ENCODE measurements at regions of chr11 and their contacts with region 1.

Region 1: DNA sequence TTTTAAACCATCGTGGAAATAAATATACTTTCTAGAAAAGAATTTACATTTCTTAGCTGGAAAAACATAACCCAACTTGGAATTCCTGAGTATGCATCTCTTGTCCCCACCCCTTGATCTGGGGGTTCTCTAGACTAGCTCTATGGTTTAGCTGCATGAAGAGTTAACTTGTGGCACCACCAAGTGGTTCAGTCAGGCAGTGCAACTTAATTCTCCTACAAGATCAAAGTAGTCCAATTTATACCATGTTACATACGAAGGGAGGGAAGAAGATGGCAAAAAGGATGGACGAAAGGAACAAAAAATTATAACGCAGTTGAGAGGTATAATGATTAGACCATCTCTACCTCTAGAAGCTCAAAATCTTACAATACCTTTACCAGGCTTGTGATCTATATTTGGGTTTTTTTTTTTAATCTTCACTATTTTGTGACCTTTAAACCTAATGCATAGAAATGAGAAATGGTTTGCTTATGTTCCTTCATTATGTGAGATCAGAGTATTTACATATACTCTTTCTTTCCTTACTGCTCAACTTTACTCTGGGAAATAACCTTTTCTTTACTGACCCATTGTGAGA is 28.5 kb upstream of the ALKBH3 start:
- DNase-seq: peak; percentile 68 to 70
- H3K4me3 ChIP-seq: no peak overlapping the region
- H3K4me3 Mint-ChIP-seq: no peak overlapping the region
- H3K27ac Mint-ChIP-seq: no peak overlapping the region
- H3K4me1 ChIP-seq: no peaks in the 10 kb centered on the region
- H3K4me1 Mint-ChIP-seq: no peaks in the 10 kb centered on the region
- H3K27me3 ChIP-seq: no peaks in the 10 kb centered on the region
- H3K27me3 Mint-ChIP-seq: no peaks in the 10 kb centered on the region
- CTCF ChIP-seq: peak; percentile 73 to 81

Region 2: GRCh38 chr11:43567396-43567975 is 284.7 kb before region 1 on chr11:
- CTCF ChIA-PET with region 1: interaction called, 12 read pairs
- POLR2A ChIA-PET with region 1: no interaction called
- intact Hi-C with region 1: no loop called
- DNase-seq: peak in 1 of 2 experiments; percentile 39
- H3K4me3 ChIP-seq: no peak overlapping the region
- H3K4me3 Mint-ChIP-seq: no peak overlapping the region
- H3K27ac Mint-ChIP-seq: no peak overlapping the region
- H3K4me1 ChIP-seq: no peaks in the 10 kb centered on the region
- H3K4me1 Mint-ChIP-seq: no peaks in the 10 kb centered on the region
- H3K27me3 ChIP-seq: no peaks in the 10 kb centered on the region; the same call in 1 of the 2 replicates
- H3K27me3 Mint-ChIP-seq: peaks cover 6% of the 10 kb centered on the region
- CTCF ChIP-seq: peak; percentile 66 to 76

Region 3: GRCh38 chr11:43579171-43579918 is 272.8 kb before region 1 on chr11:
- CTCF ChIA-PET with region 1: interaction called, 3 read pairs
- POLR2A ChIA-PET with region 1: no interaction called
- intact Hi-C with region 1: loop called (anchors 5 kb)
- DNase-seq: peak in 1 of 2 experiments; percentile 45
- H3K4me3 ChIP-seq: peak overlapping the region; percentile 60
- H3K4me3 Mint-ChIP-seq: peak overlapping the region; percentile 75
- H3K27ac Mint-ChIP-seq: no peak overlapping the region
- H3K4me1 ChIP-seq: no peaks in the 10 kb centered on the region; the same call in 1 of the 2 replicates
- H3K4me1 Mint-ChIP-seq: peaks cover 27% of the 10 kb centered on the region
- H3K27me3 ChIP-seq: peaks cover 6% of the 10 kb centered on the region
- H3K27me3 Mint-ChIP-seq: peaks cover 63% of the 10 kb centered on the region
- CTCF ChIP-seq: peak; percentile 40 to 65

Region 4: GRCh38 chr11:43756575-43756974 is 95.6 kb before region 1 on chr11:
- CTCF ChIA-PET with region 1: no interaction called
- POLR2A ChIA-PET with region 1: no interaction called
- intact Hi-C with region 1: no loop called
- DNase-seq: no peak
- H3K4me3 ChIP-seq: no peak overlapping the region
- H3K4me3 Mint-ChIP-seq: no peak overlapping the region
- H3K27ac Mint-ChIP-seq: no peak overlapping the region
- H3K4me1 ChIP-seq: no peaks in the 10 kb centered on the region
- H3K4me1 Mint-ChIP-seq: no peaks in the 10 kb centered on the region
- H3K27me3 ChIP-seq: no peaks in the 10 kb centered on the region
- H3K27me3 Mint-ChIP-seq: no peaks in the 10 kb centered on the region
- CTCF ChIP-seq: no peak

Region 5: DNA sequence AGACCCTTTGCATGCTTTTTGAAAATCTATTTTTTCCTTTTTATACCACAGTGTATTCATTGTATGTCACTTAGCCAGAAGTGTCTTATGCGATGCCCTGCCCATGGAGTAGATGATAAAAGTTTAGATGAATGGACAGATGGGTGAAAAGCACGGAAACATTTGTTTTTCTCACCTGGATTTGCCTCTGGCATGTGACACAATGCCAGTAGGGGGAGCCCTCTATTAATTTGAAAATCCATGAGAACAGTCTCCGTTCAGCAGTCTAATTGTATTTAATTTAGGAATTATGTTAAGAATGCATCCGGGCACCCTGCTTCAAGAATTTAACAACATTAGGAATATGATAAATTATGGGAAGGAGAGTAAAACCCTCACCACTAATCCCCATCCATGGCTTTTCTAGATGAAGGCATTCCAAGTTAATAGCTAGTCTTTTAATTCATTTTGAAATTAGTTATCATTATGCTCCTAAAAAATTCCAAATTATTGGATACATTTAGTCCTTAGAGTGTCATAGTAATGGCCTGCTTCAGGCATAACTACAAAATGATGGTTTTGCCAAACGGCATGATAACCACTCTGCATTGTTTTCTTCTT is 26.8 kb before region 1 on chr11:
- CTCF ChIA-PET with region 1: interaction called, 16 read pairs
- POLR2A ChIA-PET with region 1: no interaction called
- intact Hi-C with region 1: no loop called
- DNase-seq: peak in 1 of 2 experiments; percentile 54
- H3K4me3 ChIP-seq: no peak overlapping the region
- H3K4me3 Mint-ChIP-seq: no peak overlapping the region
- H3K27ac Mint-ChIP-seq: no peak overlapping the region
- H3K4me1 ChIP-seq: no peaks in the 10 kb centered on the region
- H3K4me1 Mint-ChIP-seq: no peaks in the 10 kb centered on the region
- H3K27me3 ChIP-seq: no peaks in the 10 kb centered on the region
- H3K27me3 Mint-ChIP-seq: no peaks in the 10 kb centered on the region
- CTCF ChIP-seq: peak; percentile 73 to 84